Caco-2 (cell line): ENCODE measurements at regions of chr13 and their contacts with region 1.

Region 1: GRCh38 chr13:73399347-73400216 is 340.8 kb downstream of the KLF5 start:
- DNase-seq: peak; percentile 77 to 80
- H3K4me3 ChIP-seq: no peak overlapping the region
- H3K4me3 Mint-ChIP-seq: peak overlapping the region; percentile 36
- H3K27ac Mint-ChIP-seq: peak overlapping the region; percentile 77
- H3K4me1 ChIP-seq: peaks cover 42% of the 10 kb centered on the region
- H3K4me1 Mint-ChIP-seq: peaks cover 49% of the 10 kb centered on the region
- H3K27me3 ChIP-seq: no peaks in the 10 kb centered on the region
- H3K27me3 Mint-ChIP-seq: no peaks in the 10 kb centered on the region
- CTCF ChIP-seq: no peak

Region 2: DNA sequence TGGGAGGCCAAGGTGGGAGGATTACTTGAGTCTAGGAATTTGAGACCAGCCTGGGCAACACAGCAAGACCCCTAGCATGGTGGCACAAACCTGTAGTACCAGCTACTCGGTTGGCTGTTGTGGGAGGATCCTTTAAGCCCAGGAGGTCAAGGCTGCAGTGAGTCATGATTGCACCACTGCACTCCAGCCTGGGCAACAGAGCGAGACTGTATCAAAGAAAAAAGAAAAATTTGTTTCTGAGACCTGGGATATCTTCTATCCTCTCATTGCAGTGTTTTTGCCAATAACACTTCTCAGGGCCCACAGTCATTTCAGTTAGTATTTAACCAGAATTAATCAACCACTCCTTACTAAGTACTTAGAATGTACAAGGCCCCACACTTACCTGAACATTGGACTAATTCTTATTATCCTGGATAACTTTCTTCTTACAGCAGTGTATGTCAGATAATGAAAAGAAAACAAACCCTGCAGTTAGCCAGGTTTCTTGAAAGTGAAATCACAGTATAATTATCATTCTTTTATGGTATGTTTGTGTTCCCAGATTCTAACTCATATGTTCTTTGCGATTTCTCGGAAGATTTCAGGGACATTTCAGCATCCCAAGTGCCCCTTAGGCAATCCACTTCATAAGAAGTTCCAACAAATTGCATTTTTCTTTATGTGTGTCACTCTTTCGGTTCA is 416.4 kb before region 1 on chr13:
- CTCF ChIA-PET with region 1: no interaction called
- POLR2A ChIA-PET with region 1: no interaction called
- intact Hi-C with region 1: loop called (anchors 5 kb)
- DNase-seq: peak; percentile 38 to 48
- H3K4me3 ChIP-seq: no peak overlapping the region
- H3K4me3 Mint-ChIP-seq: no peak overlapping the region
- H3K27ac Mint-ChIP-seq: peak overlapping the region; percentile 36
- H3K4me1 ChIP-seq: peaks cover 51% of the 10 kb centered on the region
- H3K4me1 Mint-ChIP-seq: no peaks in the 10 kb centered on the region
- H3K27me3 ChIP-seq: no peaks in the 10 kb centered on the region
- H3K27me3 Mint-ChIP-seq: no peaks in the 10 kb centered on the region
- CTCF ChIP-seq: no peak

Region 3: DNA sequence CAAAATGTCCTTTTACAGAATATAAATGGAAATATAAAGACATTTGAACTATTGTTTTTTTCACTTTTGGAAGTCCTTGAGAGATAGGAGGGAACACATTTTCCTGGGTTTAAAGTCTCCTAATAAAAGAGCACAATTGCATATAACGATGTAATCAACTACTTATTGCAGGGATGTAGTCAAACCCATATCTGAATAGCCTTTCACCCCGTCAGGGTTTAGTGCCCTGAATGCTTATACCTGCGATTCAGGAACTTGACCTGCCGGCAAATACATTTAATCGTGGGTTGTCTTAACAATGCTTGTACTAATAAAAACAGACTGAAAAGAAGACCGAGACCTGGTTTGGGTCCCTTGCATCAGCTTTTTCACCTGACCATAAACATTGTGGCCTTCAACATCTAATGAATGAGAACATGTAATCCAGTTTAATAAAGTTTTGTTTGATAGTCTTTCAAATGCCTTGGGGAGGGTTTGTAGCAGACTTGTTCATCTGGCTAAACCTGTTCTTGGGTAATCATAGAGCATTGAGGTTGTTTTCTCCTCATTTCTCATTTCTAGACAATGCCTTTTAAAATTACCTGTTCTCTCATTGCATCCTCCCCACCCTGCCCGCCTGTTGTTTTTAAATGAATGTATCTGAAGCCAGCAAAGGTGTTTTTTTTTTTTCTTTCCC is 333.8 kb before region 1 on chr13:
- CTCF ChIA-PET with region 1: no interaction called
- POLR2A ChIA-PET with region 1: no interaction called
- intact Hi-C with region 1: loop called (anchors 5 kb)
- DNase-seq: peak in 1 of 2 experiments; percentile 74
- H3K4me3 ChIP-seq: no peak overlapping the region
- H3K4me3 Mint-ChIP-seq: peak overlapping the region; percentile 33
- H3K27ac Mint-ChIP-seq: peak overlapping the region; percentile 55
- H3K4me1 ChIP-seq: peaks cover 85% of the 10 kb centered on the region
- H3K4me1 Mint-ChIP-seq: peaks cover 50% of the 10 kb centered on the region
- H3K27me3 ChIP-seq: no peaks in the 10 kb centered on the region
- H3K27me3 Mint-ChIP-seq: no peaks in the 10 kb centered on the region
- CTCF ChIP-seq: no peak

Region 4: GRCh38 chr13:73107481-73107880 is 292.1 kb before region 1 on chr13:
- CTCF ChIA-PET with region 1: no interaction called
- POLR2A ChIA-PET with region 1: no interaction called
- intact Hi-C with region 1: loop called (anchors 10 kb)
- DNase-seq: no peak
- H3K4me3 ChIP-seq: no peak overlapping the region
- H3K4me3 Mint-ChIP-seq: no peak overlapping the region
- H3K27ac Mint-ChIP-seq: no peak overlapping the region
- H3K4me1 ChIP-seq: peaks cover 38% of the 10 kb centered on the region
- H3K4me1 Mint-ChIP-seq: peaks cover 40% of the 10 kb centered on the region
- H3K27me3 ChIP-seq: no peaks in the 10 kb centered on the region
- H3K27me3 Mint-ChIP-seq: no peaks in the 10 kb centered on the region
- CTCF ChIP-seq: no peak

Region 5: GRCh38 chr13:73248711-73249578 is 150.6 kb before region 1 on chr13:
- CTCF ChIA-PET with region 1: no interaction called
- POLR2A ChIA-PET with region 1: no interaction called
- intact Hi-C with region 1: loop called (anchors 1 kb)
- DNase-seq: peak; percentile 67 to 68
- H3K4me3 ChIP-seq: no peak overlapping the region
- H3K4me3 Mint-ChIP-seq: peak overlapping the region; percentile 58
- H3K27ac Mint-ChIP-seq: peak overlapping the region; percentile 97
- H3K4me1 ChIP-seq: peaks cover 52% of the 10 kb centered on the region
- H3K4me1 Mint-ChIP-seq: peaks cover 58% of the 10 kb centered on the region
- H3K27me3 ChIP-seq: no peaks in the 10 kb centered on the region
- H3K27me3 Mint-ChIP-seq: no peaks in the 10 kb centered on the region
- CTCF ChIP-seq: no peak

Region 6: DNA sequence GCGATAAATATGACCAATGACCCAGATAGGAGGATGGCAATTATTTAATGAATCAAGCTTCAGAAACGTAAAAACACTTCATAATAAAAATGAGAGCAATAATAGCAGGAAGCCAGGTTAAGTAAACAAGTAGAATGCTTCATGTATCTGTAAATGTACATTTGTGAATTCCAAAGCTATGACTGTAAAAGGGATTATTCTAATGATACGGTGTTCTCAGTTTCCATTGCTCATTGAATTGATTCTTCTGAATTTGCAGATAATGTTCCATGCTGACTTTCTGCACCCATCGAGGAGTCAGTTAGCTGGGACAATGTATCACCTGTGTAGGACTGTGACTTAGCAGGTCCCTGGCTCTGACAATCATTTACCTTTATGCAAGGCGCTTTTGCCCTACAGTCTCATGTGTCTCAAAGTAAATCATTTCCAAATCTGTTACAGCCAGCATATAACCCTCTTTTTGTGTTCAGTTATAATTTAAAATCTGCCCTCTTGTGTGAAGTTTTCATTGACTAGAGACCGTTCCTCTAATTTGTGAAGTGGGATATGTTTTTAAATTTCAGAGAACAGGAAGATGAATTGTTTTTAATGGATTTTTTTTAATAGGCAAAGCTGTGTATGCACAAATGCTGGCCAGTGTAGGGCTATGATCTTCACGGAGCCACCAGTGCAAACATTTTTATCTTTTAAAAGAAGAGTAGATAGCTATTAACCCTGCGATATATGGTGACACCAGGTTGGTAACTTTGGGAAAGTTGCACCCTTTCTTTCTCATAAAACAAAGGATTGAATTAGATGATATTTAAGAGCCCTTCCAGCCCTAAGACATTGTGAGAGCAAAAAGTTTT is 73.6 kb before region 1 on chr13:
- CTCF ChIA-PET with region 1: no interaction called
- POLR2A ChIA-PET with region 1: no interaction called
- intact Hi-C with region 1: loop called (anchors 5 kb)
- DNase-seq: peak; percentile 64 to 78
- H3K4me3 ChIP-seq: no peak overlapping the region
- H3K4me3 Mint-ChIP-seq: peak overlapping the region; percentile 65
- H3K27ac Mint-ChIP-seq: peak overlapping the region; percentile 75
- H3K4me1 ChIP-seq: peaks cover 42% of the 10 kb centered on the region
- H3K4me1 Mint-ChIP-seq: peaks cover 30% of the 10 kb centered on the region
- H3K27me3 ChIP-seq: no peaks in the 10 kb centered on the region
- H3K27me3 Mint-ChIP-seq: no peaks in the 10 kb centered on the region
- CTCF ChIP-seq: no peak

Region 7: GRCh38 chr13:73417015-73417623 is 17.5 kb after region 1 on chr13:
- CTCF ChIA-PET with region 1: no interaction called
- POLR2A ChIA-PET with region 1: no interaction called
- intact Hi-C with region 1: loop called (anchors 1 kb)
- DNase-seq: peak in 1 of 2 experiments; percentile 55
- H3K4me3 ChIP-seq: no peak overlapping the region
- H3K4me3 Mint-ChIP-seq: no peak overlapping the region
- H3K27ac Mint-ChIP-seq: no peak overlapping the region
- H3K4me1 ChIP-seq: peaks cover 19% of the 10 kb centered on the region
- H3K4me1 Mint-ChIP-seq: peaks cover 15% of the 10 kb centered on the region
- H3K27me3 ChIP-seq: no peaks in the 10 kb centered on the region
- H3K27me3 Mint-ChIP-seq: no peaks in the 10 kb centered on the region
- CTCF ChIP-seq: peak; percentile 38 to 45